H1 (cell line): ENCODE measurements at regions of chr15 and their contacts with region 1.

Region 1: DNA sequence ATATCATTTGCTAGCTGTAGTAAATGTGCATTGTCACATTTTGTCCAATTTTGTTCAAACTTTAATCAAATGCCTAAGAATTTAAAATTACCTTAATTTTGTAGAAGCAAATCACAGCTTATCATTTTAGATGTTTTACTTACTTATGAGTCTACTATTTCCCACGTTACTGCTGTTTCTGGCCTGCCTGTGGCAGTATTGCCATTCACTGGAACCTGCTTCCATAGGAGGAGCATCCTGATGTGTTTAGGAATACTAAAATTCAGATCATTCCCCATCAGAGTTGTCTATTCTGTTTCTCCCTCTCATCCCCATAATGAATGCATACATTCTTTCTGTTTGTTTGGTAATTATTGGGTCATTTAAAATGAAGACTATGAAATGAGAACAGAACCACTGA is 119.5 kb upstream of the SNRPN start:
- DNase-seq: no peak
- H3K4me3 ChIP-seq: no peak overlapping the region
- H3K27ac ChIP-seq: no peak overlapping the region
- H3K4me1 ChIP-seq: peaks cover 0 to 4% (median 0%) of the 10 kb centered on the region in 4 experiments; a peak in 1 of 7 replicates
- H3K27me3 ChIP-seq: no peaks in the 10 kb centered on the region
- CTCF ChIP-seq: peak in 2 of 3 experiments; percentile 13 to 27; a peak in 2 of 4 replicates
- EP300 ChIP-seq: no peak
- POLR2A ChIP-seq: no peak
- RAD21 ChIP-seq: peak; percentile 57 to 59

Region 2: DNA sequence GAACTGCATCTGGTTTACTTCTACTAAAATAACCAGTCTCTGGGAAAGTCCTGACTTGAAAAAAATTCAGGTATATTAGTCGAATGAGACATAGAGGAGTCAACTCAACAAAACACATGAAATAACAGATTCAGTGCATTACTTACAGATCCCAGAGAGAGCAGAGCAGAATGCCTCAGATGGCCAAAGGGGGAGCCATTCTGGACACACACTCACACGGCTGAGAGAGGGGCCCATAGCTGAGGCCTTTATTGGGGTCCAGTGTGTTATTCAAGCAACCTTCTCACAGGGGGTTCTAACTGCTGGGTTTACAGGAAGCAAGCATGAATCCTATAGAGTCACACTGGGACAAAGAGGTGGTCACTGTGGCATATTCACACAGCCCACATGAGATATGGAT is 15.6 kb before region 1 on chr15:
- CTCF ChIA-PET with region 1: interaction called, 14 read pairs
- POLR2A ChIA-PET with region 1: interaction called, 5 read pairs
- DNase-seq: peak in 1 of 2 experiments; percentile 2
- H3K4me3 ChIP-seq: no peak overlapping the region
- H3K27ac ChIP-seq: no peak overlapping the region
- H3K4me1 ChIP-seq: peaks cover 0 to 5% (median 2%) of the 10 kb centered on the region in 4 experiments; a peak in 2 of 7 replicates
- H3K27me3 ChIP-seq: no peaks in the 10 kb centered on the region
- CTCF ChIP-seq: peak; percentile 35 to 64 (median 54)
- EP300 ChIP-seq: no peak
- POLR2A ChIP-seq: no peak
- RAD21 ChIP-seq: peak in 1 of 2 experiments; percentile 44; a peak in 2 of 4 replicates